PC-9 (cell line): ENCODE measurements at regions of chr10 and their contacts with region 1.

Region 1: DNA sequence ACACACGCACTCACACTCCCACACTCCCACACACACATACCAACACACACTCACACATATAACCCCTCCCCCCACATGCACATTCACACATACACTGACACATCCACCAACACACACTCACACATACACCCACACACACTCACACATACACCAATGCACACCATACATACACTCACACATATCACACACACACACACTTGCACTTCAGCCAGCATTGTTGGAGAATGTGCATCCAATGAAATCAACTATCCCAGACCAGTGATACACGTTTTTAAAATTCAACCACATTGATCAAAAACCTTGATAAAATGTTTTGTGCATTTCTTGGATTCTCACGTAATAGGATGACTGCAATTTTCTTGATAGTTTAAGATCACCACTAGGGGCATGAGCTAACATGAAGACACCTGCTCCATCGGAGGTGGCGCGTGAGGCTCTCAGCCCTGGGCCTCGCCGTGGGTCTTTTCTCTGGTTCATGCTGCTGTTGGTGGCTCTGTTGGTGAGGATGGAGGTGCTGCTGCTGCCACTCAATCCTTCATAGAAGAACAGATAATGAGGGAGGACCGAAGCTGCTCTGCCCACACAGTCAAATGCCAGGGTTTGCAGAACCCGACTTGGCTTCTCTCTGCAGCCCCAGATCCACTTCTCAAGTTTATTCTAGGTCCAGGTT is 32.2 kb upstream of the CHST15 start:
- DNase-seq: peak; percentile 28 to 78
- H3K4me3 ChIP-seq: no peak overlapping the region
- H3K27ac ChIP-seq: peak overlapping the region; percentile 22; the same call in 1 of the 2 replicates
- H3K4me1 ChIP-seq: peaks cover 6% of the 10 kb centered on the region
- H3K27me3 ChIP-seq: no peaks in the 10 kb centered on the region
- CTCF ChIP-seq: peak; percentile 58

Region 2: GRCh38 chr10:124886195-124886594 is 760.6 kb after region 1 on chr10:
- CTCF ChIA-PET with region 1: interaction called, 13 read pairs
- POLR2A ChIA-PET with region 1: no interaction called
- intact Hi-C with region 1: no loop called
- DNase-seq: no peak
- H3K4me3 ChIP-seq: no peak overlapping the region
- H3K27ac ChIP-seq: no peak overlapping the region
- H3K4me1 ChIP-seq: no peaks in the 10 kb centered on the region
- H3K27me3 ChIP-seq: no peaks in the 10 kb centered on the region
- CTCF ChIP-seq: no peak